Activated CD8-positive, alpha-beta memory T cell treated with anti-CD3 and anti-CD28 coated beads, Interleukin-2, amount 10 ng/mL, durations not matched to agents 7 days and 5 days (primary cell): ENCODE measurements at regions of chr15 and their contacts with region 1.

Region 1: GRCh38 chr15:75201609-75202250 is at the start of gene C15orf39:
- DNase-seq: peak; percentile 81
- ATAC-seq: peak; percentile 59
- H3K4me3 Mint-ChIP-seq: peak within 1 kb of the TSS; percentile 93
- H3K27ac Mint-ChIP-seq: peak within 1 kb of the TSS; percentile 89
- H3K4me1 Mint-ChIP-seq: peaks cover 56% of the 10 kb centered on the region
- H3K27me3 Mint-ChIP-seq: no peaks in the 10 kb centered on the region
- total RNA-seq, gene C15orf39: 62.8 to 63.0 TPM

Region 2: GRCh38 chr15:75023181-75023871 is 178.4 kb before region 1 on chr15 and contains the start of gene PPCDC:
- CTCF ChIA-PET with region 1: interaction called, 38 read pairs
- DNase-seq: peak; percentile 98
- ATAC-seq: peak; percentile 100
- H3K4me3 Mint-ChIP-seq: peak within 1 kb of the TSS; percentile 90
- H3K27ac Mint-ChIP-seq: peak within 1 kb of the TSS; percentile 89
- H3K4me1 Mint-ChIP-seq: peaks cover 19% of the 10 kb centered on the region
- H3K27me3 Mint-ChIP-seq: no peaks in the 10 kb centered on the region
- total RNA-seq, gene PPCDC: 36.3 to 36.7 TPM

Region 3: DNA sequence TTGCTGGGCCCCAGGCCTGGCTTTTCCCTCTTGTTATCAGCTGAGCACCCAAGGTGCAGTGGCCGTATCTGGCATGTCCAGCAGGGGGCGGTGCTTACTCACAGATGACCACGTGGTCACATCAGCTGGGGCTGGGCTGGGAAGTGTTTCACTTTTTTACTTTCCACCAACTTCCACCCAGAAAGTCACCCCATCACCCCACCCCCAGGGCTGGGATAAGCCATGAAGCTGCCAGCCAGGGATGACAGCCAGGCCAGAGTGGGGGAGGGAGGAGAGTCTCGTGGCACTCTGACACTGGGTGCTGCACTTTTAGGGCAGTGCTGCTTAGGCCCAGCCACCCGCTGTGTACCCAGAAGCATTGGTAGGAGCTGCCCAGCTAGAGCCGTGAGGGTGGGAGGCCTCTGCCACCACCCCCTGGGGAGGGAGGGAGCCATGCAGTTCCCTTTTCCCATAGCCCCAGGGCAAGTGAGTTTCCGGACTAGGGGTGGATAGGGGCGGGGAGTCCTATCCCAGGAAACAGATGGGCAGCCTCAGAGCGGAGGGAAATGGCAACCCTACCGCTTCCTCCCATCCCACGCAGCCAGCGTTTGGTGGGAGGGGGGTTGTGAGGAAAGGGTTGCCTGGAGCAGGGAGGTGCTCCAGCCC is 172.2 kb before region 1 on chr15:
- CTCF ChIA-PET with region 1: interaction called, 68 read pairs
- DNase-seq: peak; percentile 92
- ATAC-seq: peak; percentile 93
- H3K4me3 Mint-ChIP-seq: no peak overlapping the region
- H3K27ac Mint-ChIP-seq: peak overlapping the region; percentile 72
- H3K4me1 Mint-ChIP-seq: peaks cover 34% of the 10 kb centered on the region
- H3K27me3 Mint-ChIP-seq: no peaks in the 10 kb centered on the region

Region 4: DNA sequence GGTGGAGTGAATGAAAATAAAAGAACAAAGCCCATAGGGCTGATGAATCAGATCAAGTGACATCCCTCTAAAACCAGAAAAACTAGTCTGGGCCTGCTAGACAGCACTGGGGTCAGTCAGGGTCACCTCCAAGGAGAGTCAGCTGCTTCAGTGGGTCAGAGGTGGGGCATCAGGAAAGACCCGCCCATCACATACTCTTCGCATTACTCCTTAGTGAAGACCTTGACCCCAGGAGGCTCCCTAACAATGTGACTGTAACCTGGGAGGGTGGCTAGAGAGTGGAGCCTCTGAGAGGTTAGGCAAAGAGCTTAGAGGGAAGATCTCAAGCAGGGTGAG is 165.4 kb before region 1 on chr15:
- CTCF ChIA-PET with region 1: interaction called, 68 read pairs
- DNase-seq: no peak
- ATAC-seq: no peak
- H3K4me3 Mint-ChIP-seq: no peak overlapping the region
- H3K27ac Mint-ChIP-seq: peak overlapping the region; percentile 29
- H3K4me1 Mint-ChIP-seq: peaks cover 65% of the 10 kb centered on the region
- H3K27me3 Mint-ChIP-seq: no peaks in the 10 kb centered on the region

Region 5: DNA sequence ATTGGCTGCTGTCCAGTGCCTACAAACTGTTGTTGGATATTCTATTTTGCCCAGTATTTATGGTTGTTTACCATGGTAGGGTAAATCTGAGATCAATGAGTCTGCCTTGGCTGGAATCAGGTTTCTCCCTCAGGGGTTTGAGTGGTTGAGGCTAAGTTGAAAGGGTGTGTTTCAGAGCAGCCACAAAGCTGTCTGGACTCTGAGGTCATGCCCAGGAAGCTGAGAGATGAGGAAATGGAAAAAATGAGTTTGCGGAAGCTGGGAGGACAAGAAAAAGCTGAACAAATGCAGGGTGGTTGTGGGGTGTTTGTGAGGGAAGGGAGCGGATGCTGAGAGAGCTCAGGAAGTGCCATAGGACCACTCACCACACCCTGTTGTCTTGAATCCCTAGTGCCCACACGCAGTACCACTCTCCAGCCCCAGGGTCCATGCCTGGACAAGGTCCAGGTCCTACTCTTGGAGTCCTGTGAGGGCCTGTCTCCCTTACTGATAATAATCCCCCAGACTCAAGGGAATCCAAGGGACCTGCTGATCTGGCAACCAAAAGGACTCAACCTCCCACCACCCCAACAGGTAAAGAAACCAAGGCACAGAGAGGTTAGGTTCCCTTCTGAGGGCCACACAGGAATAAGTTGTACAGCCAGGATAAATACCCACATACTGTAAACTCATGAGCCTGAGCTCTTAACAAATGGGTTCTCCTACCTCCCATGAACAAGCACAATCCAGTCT is 96.8 kb before region 1 on chr15:
- CTCF ChIA-PET with region 1: interaction called, 14 read pairs
- DNase-seq: peak; percentile 72
- ATAC-seq: peak; percentile 29
- H3K4me3 Mint-ChIP-seq: no peak overlapping the region
- H3K27ac Mint-ChIP-seq: peak overlapping the region; percentile 83
- H3K4me1 Mint-ChIP-seq: peaks cover 42% of the 10 kb centered on the region
- H3K27me3 Mint-ChIP-seq: peaks cover 18% of the 10 kb centered on the region

Region 6: GRCh38 chr15:75130597-75131268 is 71.0 kb before region 1 on chr15:
- CTCF ChIA-PET with region 1: interaction called, 10 read pairs
- DNase-seq: peak; percentile 47
- ATAC-seq: peak; percentile 97
- H3K4me3 Mint-ChIP-seq: peak overlapping the region; percentile 72
- H3K27ac Mint-ChIP-seq: peak overlapping the region; percentile 79
- H3K4me1 Mint-ChIP-seq: peaks cover 32% of the 10 kb centered on the region
- H3K27me3 Mint-ChIP-seq: peaks cover 32% of the 10 kb centered on the region